PC-9 (cell line): ENCODE measurements at regions of chr2 and their contacts with region 1.

Region 1: GRCh38 chr2:127064642-127065250 is 42.2 kb downstream of the BIN1 start:
- DNase-seq: peak; percentile 99
- H3K4me3 ChIP-seq: no peak overlapping the region
- H3K27ac ChIP-seq: peak overlapping the region; percentile 73
- H3K4me1 ChIP-seq: peaks cover 32% of the 10 kb centered on the region
- H3K27me3 ChIP-seq: no peaks in the 10 kb centered on the region
- CTCF ChIP-seq: peak; percentile 54; the same call in 1 of the 2 replicates

Region 2: DNA sequence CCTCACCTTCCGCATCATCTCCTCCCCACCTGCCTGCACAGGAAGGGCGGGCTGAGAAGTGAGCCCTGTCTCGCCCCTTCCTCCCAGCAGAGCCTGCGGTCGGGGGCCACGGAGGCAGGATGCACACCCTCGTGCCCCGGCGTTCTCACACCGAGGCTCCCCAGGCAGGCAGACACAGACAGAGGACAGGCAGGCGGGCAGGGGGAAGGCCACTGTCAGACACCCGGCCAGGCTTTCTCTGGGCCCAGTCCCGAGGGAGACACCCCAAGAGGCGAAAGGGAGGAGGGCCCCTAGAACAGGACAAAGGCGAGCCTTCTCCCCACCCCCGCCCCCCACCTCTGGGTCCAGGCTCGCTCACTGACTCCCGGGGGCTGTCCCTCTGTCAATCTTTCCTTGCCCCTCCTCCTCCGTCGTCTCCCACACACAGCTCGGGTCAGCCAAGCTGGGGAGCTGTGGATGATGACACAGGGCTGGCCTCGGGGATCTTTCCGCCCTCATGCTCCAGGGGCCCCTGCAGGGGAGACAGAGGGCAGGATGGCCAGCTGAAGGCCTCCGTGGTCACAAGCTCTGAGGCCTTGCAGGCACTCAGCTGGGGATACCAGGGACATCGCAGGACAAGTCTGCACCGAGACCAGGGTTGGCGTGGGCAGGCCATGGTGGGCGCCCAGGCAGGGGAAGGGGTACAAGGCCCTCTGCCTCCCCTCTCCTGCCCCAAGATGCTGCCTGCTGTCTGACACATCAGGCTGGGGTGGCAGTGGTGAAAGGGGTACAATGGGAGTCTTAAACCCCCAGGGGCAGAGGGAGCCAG is 17.3 kb after region 1 on chr2:
- CTCF ChIA-PET with region 1: interaction called, 3 read pairs
- POLR2A ChIA-PET with region 1: no interaction called
- intact Hi-C with region 1: loop called (anchors 2 kb)
- DNase-seq: no peak
- H3K4me3 ChIP-seq: no peak overlapping the region
- H3K27ac ChIP-seq: no peak overlapping the region
- H3K4me1 ChIP-seq: peaks cover 35% of the 10 kb centered on the region
- H3K27me3 ChIP-seq: no peaks in the 10 kb centered on the region
- CTCF ChIP-seq: no peak

Region 3: DNA sequence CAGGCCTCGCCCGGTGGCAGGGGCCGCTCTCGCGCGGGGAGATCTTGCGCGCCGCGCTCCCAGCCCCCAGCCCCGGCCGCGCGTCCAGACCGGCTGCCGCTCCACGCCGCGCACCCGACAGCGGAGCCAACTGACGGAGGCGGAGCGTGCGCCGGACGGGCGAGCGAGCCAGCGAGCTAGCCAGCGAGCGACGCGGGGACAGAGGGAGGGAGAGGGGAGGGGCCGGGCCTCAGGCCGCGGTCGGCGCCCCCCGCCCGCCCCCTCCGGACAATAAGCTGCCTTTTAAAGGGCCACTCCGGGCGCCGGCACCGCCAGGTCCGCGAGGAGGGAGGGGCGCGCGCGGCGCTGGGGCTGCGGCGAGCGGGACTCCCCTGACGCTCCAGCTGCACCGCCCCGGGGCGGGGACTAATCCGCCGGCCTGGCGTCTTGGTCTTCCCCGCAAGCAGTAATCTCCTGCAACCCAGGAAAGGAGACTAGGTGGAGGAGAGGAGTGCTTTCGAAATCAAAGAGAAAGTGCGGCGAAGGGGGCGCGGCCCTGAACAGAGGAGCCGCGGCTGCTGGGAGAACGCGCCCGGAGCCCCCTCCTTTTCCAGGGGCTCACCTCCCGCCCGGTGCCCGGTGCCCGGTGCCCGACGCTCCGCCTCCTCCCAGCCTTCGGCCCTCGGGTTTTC is 42.3 kb after region 1 on chr2 and contains the start of gene BIN1:
- CTCF ChIA-PET with region 1: interaction called, 20 read pairs
- POLR2A ChIA-PET with region 1: interaction called, 3 read pairs
- intact Hi-C with region 1: loop called (anchors 1 kb)
- DNase-seq: peak; percentile 87 to 94
- H3K4me3 ChIP-seq: peak within 1 kb of the TSS; percentile 96
- H3K27ac ChIP-seq: peak within 1 kb of the TSS; percentile 31
- H3K4me1 ChIP-seq: peaks cover 50% of the 10 kb centered on the region
- H3K27me3 ChIP-seq: no peaks in the 10 kb centered on the region
- CTCF ChIP-seq: no peak
- total RNA-seq, gene BIN1: 87.5 and 95.6 TPM in 2 replicates

Region 4: DNA sequence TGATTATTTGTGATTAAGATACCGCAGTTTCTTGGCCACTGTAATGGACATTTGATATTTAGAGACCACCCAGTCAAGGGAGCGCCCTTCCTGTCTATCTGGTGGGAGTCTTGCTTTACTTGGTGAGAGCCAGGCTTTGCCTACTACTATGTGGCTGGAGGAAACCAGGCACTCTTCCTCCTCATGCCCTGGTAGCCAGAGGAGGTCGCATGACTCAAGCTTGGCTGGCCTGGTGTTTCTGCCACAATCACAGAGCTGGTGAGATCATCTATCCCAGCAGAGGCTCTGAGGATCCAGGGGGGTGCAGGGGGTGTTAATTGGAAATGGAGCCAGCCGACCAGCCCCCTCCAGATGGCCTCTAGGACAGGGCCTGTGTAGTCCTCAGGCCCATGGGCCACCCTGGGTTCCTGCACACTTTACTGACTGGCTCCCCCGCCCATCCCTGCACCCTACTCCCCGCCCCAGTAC is 89.0 kb after region 1 on chr2:
- CTCF ChIA-PET with region 1: interaction called, 4 read pairs
- POLR2A ChIA-PET with region 1: no interaction called
- intact Hi-C with region 1: loop called (anchors 1 kb)
- DNase-seq: peak; percentile 80 to 95
- H3K4me3 ChIP-seq: no peak overlapping the region
- H3K27ac ChIP-seq: peak overlapping the region; percentile 80
- H3K4me1 ChIP-seq: peaks cover 61% of the 10 kb centered on the region
- H3K27me3 ChIP-seq: no peaks in the 10 kb centered on the region
- CTCF ChIP-seq: no peak; the same call in 1 of the 2 replicates

Region 5: GRCh38 chr2:127197475-127198385 is 133.0 kb after region 1 on chr2:
- CTCF ChIA-PET with region 1: interaction called, 8 read pairs
- POLR2A ChIA-PET with region 1: no interaction called
- intact Hi-C with region 1: loop called (anchors 1 kb)
- DNase-seq: peak; percentile 71 to 83
- H3K4me3 ChIP-seq: no peak overlapping the region
- H3K27ac ChIP-seq: no peak overlapping the region
- H3K4me1 ChIP-seq: no peaks in the 10 kb centered on the region
- H3K27me3 ChIP-seq: no peaks in the 10 kb centered on the region
- CTCF ChIP-seq: peak; percentile 88

Region 6: GRCh38 chr2:127408004-127408806 is 343.5 kb after region 1 on chr2:
- CTCF ChIA-PET with region 1: no interaction called
- POLR2A ChIA-PET with region 1: no interaction called
- intact Hi-C with region 1: loop called (anchors 10 kb)
- DNase-seq: peak; percentile 78 to 98
- H3K4me3 ChIP-seq: peak overlapping the region; percentile 65
- H3K27ac ChIP-seq: peak overlapping the region; percentile 56
- H3K4me1 ChIP-seq: peaks cover 48% of the 10 kb centered on the region
- H3K27me3 ChIP-seq: no peaks in the 10 kb centered on the region
- CTCF ChIP-seq: no peak